Activated T-helper 2 cell treated with anti-CD3 and anti-CD28 coated beads, Interferon-gamma antibody, Interleukin-2, Interleukin-4, amounts not matched to agents 10 μg/mL and 5 μg/mL and 100 μg/mL, durations not matched to agents 14 hours and 24 hours and 36 hours (primary cell): ENCODE measurements at regions of chr5 and their contacts with region 1.

Region 1: DNA sequence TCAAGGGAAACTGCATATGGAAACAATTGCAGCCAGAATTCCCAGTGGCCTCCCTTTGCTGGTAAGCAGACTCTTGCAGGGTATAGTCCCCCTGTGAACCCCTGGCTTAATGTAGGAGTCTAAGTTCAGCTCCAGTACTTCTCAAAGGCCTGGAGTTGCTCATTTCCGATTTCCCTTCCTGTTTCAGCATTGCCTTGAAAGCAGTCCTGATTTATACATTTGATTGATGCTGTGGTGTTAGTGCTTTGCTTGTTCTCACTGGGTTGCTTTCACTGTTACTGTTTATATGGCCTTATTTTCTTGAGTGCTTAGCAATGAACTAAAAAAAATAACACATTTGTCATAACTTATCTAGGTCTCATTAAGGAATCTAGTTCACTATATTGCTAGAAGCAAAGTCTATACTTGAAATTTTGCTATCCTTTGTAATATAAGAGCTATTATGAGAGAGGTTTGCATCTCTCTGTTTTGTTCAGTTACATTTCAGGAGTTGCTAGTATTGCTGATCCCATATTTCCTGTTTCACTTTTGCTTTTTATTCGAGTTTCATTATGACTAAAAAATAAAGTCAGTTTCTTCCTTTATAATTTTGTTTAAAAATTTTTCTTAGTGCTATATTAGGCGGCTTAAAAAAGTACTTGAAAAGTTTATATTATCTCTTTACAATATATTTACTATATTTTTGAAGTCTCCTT is 122.4 kb upstream of the NMUR2 start:
- DNase-seq: no peak
- H3K4me3 Mint-ChIP-seq: peak overlapping the region; percentile 50
- H3K27ac Mint-ChIP-seq: peak overlapping the region; percentile 77
- H3K4me1 Mint-ChIP-seq: peaks cover 23% of the 10 kb centered on the region
- H3K27me3 Mint-ChIP-seq: peaks cover 22% of the 10 kb centered on the region

Region 2: GRCh38 chr5:152379331-152379730 is 148.2 kb before region 1 on chr5:
- intact Hi-C with region 1: no loop called
- DNase-seq: no peak
- H3K4me3 Mint-ChIP-seq: no peak overlapping the region
- H3K27ac Mint-ChIP-seq: no peak overlapping the region
- H3K4me1 Mint-ChIP-seq: no peaks in the 10 kb centered on the region
- H3K27me3 Mint-ChIP-seq: no peaks in the 10 kb centered on the region

Region 3: DNA sequence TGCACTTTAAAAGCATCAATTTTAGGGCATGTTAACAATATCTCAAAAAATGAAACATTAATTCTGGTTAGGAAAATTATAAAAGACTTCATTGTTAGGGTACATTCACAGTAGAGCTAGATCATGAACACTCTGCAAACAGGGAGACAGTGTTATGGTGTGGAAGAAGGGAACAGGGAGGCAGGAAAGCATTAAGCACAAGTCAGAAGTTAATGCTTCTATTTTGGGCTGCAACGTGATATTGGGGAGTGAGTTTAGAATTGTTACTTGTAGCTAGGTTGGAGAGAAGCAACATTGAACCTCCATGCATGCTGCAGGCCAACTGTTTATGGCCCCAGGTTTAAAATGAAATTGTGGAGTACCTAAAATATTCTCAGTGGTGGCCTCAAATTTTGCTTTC is 155.7 kb after region 1 on chr5:
- intact Hi-C with region 1: no loop called
- DNase-seq: no peak
- H3K4me3 Mint-ChIP-seq: no peak overlapping the region
- H3K27ac Mint-ChIP-seq: no peak overlapping the region
- H3K4me1 Mint-ChIP-seq: no peaks in the 10 kb centered on the region
- H3K27me3 Mint-ChIP-seq: no peaks in the 10 kb centered on the region

Region 4: GRCh38 chr5:153014194-153014593 is 486.7 kb after region 1 on chr5:
- intact Hi-C with region 1: no loop called
- DNase-seq: no peak
- H3K4me3 Mint-ChIP-seq: no peak overlapping the region
- H3K27ac Mint-ChIP-seq: no peak overlapping the region
- H3K4me1 Mint-ChIP-seq: no peaks in the 10 kb centered on the region
- H3K27me3 Mint-ChIP-seq: no peaks in the 10 kb centered on the region

Region 5: GRCh38 chr5:153352685-153353219 is 825.2 kb after region 1 on chr5:
- intact Hi-C with region 1: loop called (anchors 10 kb)
- DNase-seq: peak; percentile 16
- H3K4me3 Mint-ChIP-seq: peak overlapping the region; percentile 20
- H3K27ac Mint-ChIP-seq: no peak overlapping the region
- H3K4me1 Mint-ChIP-seq: peaks cover 11% of the 10 kb centered on the region
- H3K27me3 Mint-ChIP-seq: peaks cover 10% of the 10 kb centered on the region